CD8-positive, alpha-beta memory T cell (primary cell): ENCODE measurements at regions of chr19 and their contacts with region 1.

Region 1: DNA sequence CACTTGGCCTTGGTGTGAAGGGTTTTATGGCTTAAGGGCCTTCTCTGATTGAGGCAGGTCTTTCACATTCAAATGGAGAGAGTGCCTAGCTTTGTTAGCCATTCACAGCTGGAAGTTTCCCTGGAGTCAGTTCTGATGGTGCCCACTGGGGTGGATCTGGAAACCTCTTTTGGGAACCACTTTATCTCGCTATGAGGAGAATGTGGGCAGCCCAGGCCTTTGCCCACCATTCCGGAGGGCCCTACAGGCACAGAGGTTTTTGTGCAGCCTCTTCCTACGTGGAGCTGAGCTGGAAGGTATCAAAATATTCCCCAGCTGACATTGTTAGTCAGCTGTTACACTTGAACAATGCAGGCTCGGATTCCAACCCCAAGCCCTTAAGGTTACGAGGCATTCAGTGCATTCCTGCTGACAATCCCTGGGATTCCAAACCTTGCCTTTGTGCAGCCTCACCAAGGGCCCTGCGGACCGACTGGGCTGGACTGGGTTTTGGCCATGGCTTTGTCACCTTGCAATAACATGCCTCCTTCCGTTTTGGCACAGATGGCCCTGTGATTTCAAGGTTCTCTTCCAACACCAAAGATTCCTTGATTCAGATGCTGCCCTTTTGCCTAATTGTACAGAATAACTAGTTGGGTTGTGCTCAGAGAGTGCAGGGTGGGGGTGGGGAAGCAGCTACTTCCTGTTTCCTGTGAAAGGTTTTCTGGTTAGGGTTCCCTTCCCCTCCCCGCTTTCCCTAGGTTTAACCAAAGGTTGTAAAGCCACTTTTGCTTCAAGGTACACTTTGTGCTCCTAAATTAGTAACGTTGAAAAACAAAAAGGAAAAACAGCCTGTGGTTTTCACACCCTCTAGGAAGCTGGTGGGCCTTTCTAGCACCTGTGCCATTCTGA is 27.0 kb downstream of the SAE1 start:
- DNase-seq: peak in 3 of 5 donors; percentile 21 to 59 (median 45)
- H3K4me3 ChIP-seq: peak overlapping the region; percentile 48
- H3K4me3 Mint-ChIP-seq: peak overlapping the region; percentile 62 to 84 (median 80)
- H3K27ac ChIP-seq: peak overlapping the region; percentile 2
- H3K27ac Mint-ChIP-seq: peak overlapping the region; percentile 73 to 98 (median 93)
- H3K4me1 ChIP-seq: peaks cover 69% of the 10 kb centered on the region
- H3K4me1 Mint-ChIP-seq: peaks cover 50 to 78% (median 68%) of the 10 kb centered on the region in 3 donors
- H3K27me3 ChIP-seq: no peaks in the 10 kb centered on the region
- H3K27me3 Mint-ChIP-seq: no peaks in the 10 kb centered on the region

Region 2: GRCh38 chr19:47145639-47146486 is 11.8 kb before region 1 on chr19:
- CTCF ChIA-PET with region 1: interaction called, 29 read pairs
- POLR2A ChIA-PET with region 1: interaction called, 6 read pairs
- DNase-seq: peak in 2 of 5 donors; percentile 50 to 77
- H3K4me3 ChIP-seq: peak overlapping the region; percentile 22
- H3K4me3 Mint-ChIP-seq: peak overlapping the region; percentile 12 to 74 (median 48)
- H3K27ac ChIP-seq: no peak overlapping the region
- H3K27ac Mint-ChIP-seq: peak overlapping the region; percentile 49 to 94 (median 76)
- H3K4me1 ChIP-seq: peaks cover 45% of the 10 kb centered on the region
- H3K4me1 Mint-ChIP-seq: peaks cover 32 to 61% (median 56%) of the 10 kb centered on the region in 3 donors
- H3K27me3 ChIP-seq: no peaks in the 10 kb centered on the region
- H3K27me3 Mint-ChIP-seq: no peaks in the 10 kb centered on the region

Region 3: DNA sequence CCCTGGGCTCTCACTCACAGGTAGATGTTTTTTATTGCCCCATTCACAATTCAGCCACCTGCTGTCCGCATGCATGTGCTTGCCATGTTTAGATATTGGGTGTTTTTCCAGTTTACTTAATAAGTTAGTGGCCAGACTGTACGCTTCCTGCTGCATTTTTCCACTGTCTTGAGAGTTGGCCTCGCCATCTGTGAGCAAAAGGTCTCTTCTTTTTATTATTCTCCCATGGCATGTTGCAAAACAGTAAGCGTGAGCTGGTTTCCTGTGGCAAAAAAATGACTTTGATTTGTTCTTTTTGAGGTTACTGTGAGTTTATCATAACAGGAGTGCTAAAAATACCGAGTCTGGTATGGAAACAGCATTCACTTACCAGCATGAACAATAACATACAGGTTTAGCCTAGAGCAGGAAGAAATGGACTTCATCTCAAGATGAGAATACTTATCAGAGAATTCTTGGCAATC is 19.0 kb after region 1 on chr19:
- CTCF ChIA-PET with region 1: interaction called, 16 read pairs
- POLR2A ChIA-PET with region 1: interaction called, 6 read pairs
- DNase-seq: peak in 3 of 5 donors; percentile 54 to 79 (median 63)
- H3K4me3 ChIP-seq: peak overlapping the region; percentile 17
- H3K4me3 Mint-ChIP-seq: peak overlapping the region; percentile 10 to 86 (median 82)
- H3K27ac ChIP-seq: no peak overlapping the region
- H3K27ac Mint-ChIP-seq: peak overlapping the region; percentile 68 to 97 (median 92)
- H3K4me1 ChIP-seq: peaks cover 58% of the 10 kb centered on the region
- H3K4me1 Mint-ChIP-seq: peaks cover 44 to 71% (median 66%) of the 10 kb centered on the region in 3 donors
- H3K27me3 ChIP-seq: no peaks in the 10 kb centered on the region
- H3K27me3 Mint-ChIP-seq: no peaks in the 10 kb centered on the region

Region 4: GRCh38 chr19:47190167-47190727 is 32.6 kb after region 1 on chr19:
- CTCF ChIA-PET with region 1: interaction called, 47 read pairs
- POLR2A ChIA-PET with region 1: interaction called, 29 read pairs
- DNase-seq: peak in 3 of 5 donors; percentile 39 to 67 (median 67)
- H3K4me3 ChIP-seq: no peak overlapping the region
- H3K4me3 Mint-ChIP-seq: peak overlapping the region; percentile 2 to 55 (median 33)
- H3K27ac ChIP-seq: no peak overlapping the region
- H3K27ac Mint-ChIP-seq: peak overlapping the region; percentile 48 to 91 (median 70)
- H3K4me1 ChIP-seq: peaks cover 72% of the 10 kb centered on the region
- H3K4me1 Mint-ChIP-seq: peaks cover 41 to 69% (median 55%) of the 10 kb centered on the region in 3 donors
- H3K27me3 ChIP-seq: no peaks in the 10 kb centered on the region
- H3K27me3 Mint-ChIP-seq: no peaks in the 10 kb centered on the region

Region 5: DNA sequence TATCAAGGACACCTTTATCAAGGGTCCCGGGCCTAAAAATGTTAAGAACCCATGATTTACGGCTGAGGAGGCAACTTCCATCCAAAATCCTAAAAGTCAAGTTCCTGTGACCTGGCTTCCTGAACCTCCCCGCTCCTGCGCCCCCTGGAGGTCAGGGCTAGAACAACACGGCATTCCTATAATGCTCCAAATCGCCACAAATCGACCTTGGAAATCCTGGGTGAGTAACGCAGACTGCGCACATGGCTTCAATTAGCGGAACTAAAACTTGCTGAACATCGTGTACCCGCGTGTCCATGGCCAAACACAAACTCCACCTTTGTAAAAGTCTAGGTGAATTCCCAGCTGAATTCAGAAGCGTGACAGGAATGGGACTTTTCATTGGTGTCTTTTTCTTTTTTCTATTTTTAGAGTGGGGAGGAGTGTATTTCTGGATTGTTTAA is 147.7 kb after region 1 on chr19:
- CTCF ChIA-PET with region 1: no interaction called
- POLR2A ChIA-PET with region 1: no interaction called
- DNase-seq: peak; percentile 32 to 70 (median 51)
- H3K4me3 ChIP-seq: no peak overlapping the region
- H3K4me3 Mint-ChIP-seq: peak overlapping the region in 1 of 7 donors; percentile 29
- H3K27ac ChIP-seq: no peak overlapping the region
- H3K27ac Mint-ChIP-seq: peak overlapping the region in 2 of 8 donors; percentile 1 to 92
- H3K4me1 ChIP-seq: peaks cover 6% of the 10 kb centered on the region
- H3K4me1 Mint-ChIP-seq: peaks cover 9 to 13% (median 11%) of the 10 kb centered on the region in 3 donors
- H3K27me3 ChIP-seq: peaks cover 2% of the 10 kb centered on the region
- H3K27me3 Mint-ChIP-seq: peaks cover 13 to 21% of the 10 kb centered on the region in 2 donors